ENCODE measurements at regions of chr4 and their contacts with region 1.

Region 1: GRCh38 chr4:15882675-15883086 is 55.9 kb downstream of the FGFBP1 start:
- DNase-seq: peak; percentile 70

Region 2: GRCh38 chr4:15938182-15938581 is 55.5 kb after region 1 on chr4:
- CTCF ChIA-PET with region 1: no interaction called
- POLR2A ChIA-PET with region 1: no interaction called
- DNase-seq: peak; percentile 30

Region 3: DNA sequence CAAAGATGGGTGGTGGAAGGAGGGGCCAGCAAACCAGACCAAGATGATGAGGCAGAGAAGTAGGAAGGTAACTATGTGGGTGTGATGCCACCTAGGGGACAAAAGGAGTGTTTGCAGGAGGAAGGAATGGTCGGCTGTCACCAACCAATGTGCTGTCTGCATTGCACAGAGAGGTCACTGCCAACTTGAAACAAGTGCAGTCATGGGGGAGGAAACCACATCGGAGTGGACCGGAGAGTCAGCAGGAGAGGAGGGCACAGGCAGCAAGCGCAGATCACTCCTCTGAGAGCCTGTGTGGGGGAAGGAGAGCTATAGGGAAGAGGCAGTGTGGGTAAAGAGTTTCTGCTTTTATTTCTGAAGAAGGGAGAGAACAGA is 118.8 kb after region 1 on chr4:
- CTCF ChIA-PET with region 1: interaction called, 12 read pairs
- POLR2A ChIA-PET with region 1: no interaction called
- DNase-seq: peak; percentile 83

Region 4: GRCh38 chr4:16110891-16111290 is 228.2 kb after region 1 on chr4:
- CTCF ChIA-PET with region 1: no interaction called
- POLR2A ChIA-PET with region 1: no interaction called
- DNase-seq: no peak

Measured in HEK293T (cell line).